Adrenal gland (tissue), 19 donors: ENCODE measurements at regions of chr10 and their contacts with region 1.

Region 1: DNA sequence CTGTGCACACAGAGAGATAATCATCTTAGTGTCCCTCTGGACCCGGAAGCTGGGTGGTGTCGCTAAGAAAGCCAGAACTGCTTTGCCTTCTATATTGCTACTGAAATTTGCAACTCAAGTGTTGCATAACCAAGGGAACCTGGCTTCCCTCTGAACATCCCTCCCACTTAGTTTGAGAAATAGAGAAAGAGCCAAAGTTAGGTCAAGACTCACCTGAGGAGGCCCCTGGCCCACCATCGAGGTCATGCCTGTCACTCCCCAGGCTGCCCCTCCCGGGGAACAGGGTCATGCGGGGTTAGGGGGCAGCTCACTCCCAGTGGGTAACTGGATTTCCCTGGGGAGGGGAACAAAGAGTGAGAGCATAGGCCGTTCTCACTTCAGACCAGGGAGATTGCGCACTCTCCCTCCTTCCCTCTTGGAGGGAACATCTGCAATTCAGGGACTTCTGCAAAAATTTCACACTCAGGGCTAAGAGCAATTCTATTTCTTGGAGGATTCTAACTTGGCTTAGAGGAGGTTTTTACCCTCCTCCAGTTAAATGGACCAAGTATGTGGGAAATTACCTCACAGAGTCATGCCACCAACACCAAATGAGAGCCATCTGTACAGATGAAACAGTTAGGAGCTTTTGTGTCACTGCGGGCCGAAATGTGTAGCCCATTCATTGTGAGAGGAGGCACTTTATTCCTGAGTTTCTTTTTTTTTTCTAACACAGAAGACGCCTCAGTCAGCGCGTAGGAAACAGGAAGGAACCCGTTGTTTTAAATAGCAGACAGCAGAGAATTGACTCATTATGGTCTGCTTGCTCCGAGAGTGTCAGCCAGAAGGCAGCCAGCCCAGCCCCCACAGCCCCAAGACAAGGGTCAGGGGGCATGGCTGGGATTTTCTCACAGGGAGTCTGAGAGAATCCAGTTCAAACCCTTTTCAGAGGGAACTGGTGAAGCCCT is 221.3 kb downstream of the ARHGAP12 start:
- DNase-seq: peak; percentile 55 to 81 (median 64)
- H3K4me3 ChIP-seq: no peak overlapping the region
- H3K27ac ChIP-seq: peak overlapping the region; percentile 27 to 91 (median 50)
- H3K4me1 ChIP-seq: peaks cover 13 to 38% of the 10 kb centered on the region in 2 donors
- H3K27me3 ChIP-seq: no peaks in the 10 kb centered on the region
- CTCF ChIP-seq: no peak
- POLR2A ChIP-seq: peak in 1 of 2 donors; percentile 2

Region 2: GRCh38 chr10:30114871-30115625 is 1592.3 kb before region 1 on chr10:
- intact Hi-C with region 1: no loop called
- DNase-seq: peak in 1 of 7 donors; percentile 21
- H3K4me3 ChIP-seq: no peak overlapping the region
- H3K27ac ChIP-seq: no peak overlapping the region
- H3K4me1 ChIP-seq: no peaks in the 10 kb centered on the region
- H3K27me3 ChIP-seq: no peaks in the 10 kb centered on the region
- CTCF ChIP-seq: no peak
- POLR2A ChIP-seq: no peak

Region 3: GRCh38 chr10:31770307-31770902 is 63.0 kb after region 1 on chr10:
- intact Hi-C with region 1: loop called in 1 of 2 experiments (anchors 10 kb)
- DNase-seq: peak in 5 of 7 donors; percentile 55 to 76 (median 65)
- H3K4me3 ChIP-seq: no peak overlapping the region
- H3K27ac ChIP-seq: no peak overlapping the region
- H3K4me1 ChIP-seq: no peaks in the 10 kb centered on the region
- H3K27me3 ChIP-seq: no peaks in the 10 kb centered on the region
- CTCF ChIP-seq: peak; percentile 62 to 82 (median 76)
- POLR2A ChIP-seq: no peak